H1 (cell line): ENCODE measurements at regions of chr11 and their contacts with region 1.

Region 1: DNA sequence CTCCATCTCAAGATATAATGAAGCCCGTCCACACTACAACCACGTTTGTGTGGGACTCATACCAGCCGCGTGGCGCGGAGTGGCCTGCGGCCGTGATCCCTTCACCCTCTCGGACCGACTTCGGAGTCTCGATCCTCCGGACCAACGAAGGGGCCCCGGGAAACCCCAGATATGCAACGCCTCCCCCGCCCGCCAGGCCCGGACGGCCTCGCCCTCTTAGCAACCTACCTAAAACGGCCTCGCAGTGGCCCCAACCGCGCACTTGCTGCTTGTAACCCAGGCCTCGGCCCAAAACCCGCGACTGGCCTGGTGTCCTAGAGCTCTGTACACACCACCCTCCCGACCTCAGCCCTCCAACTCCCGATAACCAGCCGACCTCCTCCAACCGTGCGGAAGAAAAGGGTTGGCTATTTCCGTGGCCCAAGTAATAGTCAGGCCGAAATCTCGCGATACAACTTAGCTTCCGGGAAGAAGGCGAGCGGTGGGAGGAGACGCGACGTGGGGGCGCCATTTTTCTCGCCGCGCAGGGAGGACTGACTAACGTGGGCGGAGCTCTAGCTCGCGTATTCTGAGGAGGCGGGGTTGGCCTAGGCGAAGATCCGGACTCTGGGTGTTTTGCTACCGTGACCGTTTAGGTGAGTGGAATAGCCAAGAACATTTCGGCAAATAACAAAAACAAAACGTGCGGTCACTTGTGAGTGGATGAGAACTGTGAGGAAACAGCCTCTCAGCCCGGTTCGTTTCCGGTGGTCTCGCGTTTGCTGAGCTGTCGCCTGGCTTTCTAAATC is at the starts of genes C11orf54 and TAF1D:
- DNase-seq: peak; percentile 88 to 93
- H3K4me3 ChIP-seq: peak within 1 kb of the TSS; percentile 91 to 100 (median 98)
- H3K27ac ChIP-seq: peak within 1 kb of the TSS; percentile 93
- H3K4me1 ChIP-seq: peaks cover 3 to 9% (median 6%) of the 10 kb centered on the region in 4 experiments; a peak in 6 of 7 replicates
- H3K27me3 ChIP-seq: no peaks in the 10 kb centered on the region
- CTCF ChIP-seq: no peak
- EP300 ChIP-seq: no peak
- POLR2A ChIP-seq: peak; percentile 92 to 99
- RAD21 ChIP-seq: no peak
- total RNA-seq, gene C11orf54: 21.5 and 24.5 TPM in 2 replicates
- total RNA-seq, gene TAF1D: 202 and 212 TPM in 2 replicates

Region 2: DNA sequence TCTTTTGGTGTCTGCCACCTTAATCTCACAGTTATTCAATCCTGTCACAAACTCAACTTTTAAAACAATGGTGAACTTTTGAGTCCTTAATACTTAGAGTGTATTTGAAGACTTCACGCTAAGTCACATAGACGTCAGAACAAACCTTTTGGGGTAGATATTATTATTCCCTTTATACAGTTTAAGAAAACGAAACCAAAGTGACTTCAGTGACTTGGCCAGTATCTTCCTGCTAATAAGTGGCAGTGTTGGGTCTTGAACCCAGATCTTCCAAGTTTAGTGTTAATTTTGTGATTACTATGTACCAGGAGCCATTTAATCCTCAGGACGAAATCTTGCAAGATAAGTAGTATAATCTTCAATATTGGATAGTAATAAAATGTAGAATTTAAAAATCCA is 79.1 kb before region 1 on chr11:
- CTCF ChIA-PET with region 1: no interaction called
- POLR2A ChIA-PET with region 1: interaction called, 12 read pairs
- DNase-seq: no peak
- H3K4me3 ChIP-seq: peak overlapping the region; percentile 83 to 92 (median 85)
- H3K27ac ChIP-seq: no peak overlapping the region
- H3K4me1 ChIP-seq: no peaks in the 10 kb centered on the region; a peak in 1 of 7 replicates
- H3K27me3 ChIP-seq: peaks cover 0 to 4% (median 2%) of the 10 kb centered on the region in 4 experiments; a peak in 3 of 7 replicates
- CTCF ChIP-seq: no peak
- EP300 ChIP-seq: no peak
- POLR2A ChIP-seq: no peak
- RAD21 ChIP-seq: no peak

Region 3: DNA sequence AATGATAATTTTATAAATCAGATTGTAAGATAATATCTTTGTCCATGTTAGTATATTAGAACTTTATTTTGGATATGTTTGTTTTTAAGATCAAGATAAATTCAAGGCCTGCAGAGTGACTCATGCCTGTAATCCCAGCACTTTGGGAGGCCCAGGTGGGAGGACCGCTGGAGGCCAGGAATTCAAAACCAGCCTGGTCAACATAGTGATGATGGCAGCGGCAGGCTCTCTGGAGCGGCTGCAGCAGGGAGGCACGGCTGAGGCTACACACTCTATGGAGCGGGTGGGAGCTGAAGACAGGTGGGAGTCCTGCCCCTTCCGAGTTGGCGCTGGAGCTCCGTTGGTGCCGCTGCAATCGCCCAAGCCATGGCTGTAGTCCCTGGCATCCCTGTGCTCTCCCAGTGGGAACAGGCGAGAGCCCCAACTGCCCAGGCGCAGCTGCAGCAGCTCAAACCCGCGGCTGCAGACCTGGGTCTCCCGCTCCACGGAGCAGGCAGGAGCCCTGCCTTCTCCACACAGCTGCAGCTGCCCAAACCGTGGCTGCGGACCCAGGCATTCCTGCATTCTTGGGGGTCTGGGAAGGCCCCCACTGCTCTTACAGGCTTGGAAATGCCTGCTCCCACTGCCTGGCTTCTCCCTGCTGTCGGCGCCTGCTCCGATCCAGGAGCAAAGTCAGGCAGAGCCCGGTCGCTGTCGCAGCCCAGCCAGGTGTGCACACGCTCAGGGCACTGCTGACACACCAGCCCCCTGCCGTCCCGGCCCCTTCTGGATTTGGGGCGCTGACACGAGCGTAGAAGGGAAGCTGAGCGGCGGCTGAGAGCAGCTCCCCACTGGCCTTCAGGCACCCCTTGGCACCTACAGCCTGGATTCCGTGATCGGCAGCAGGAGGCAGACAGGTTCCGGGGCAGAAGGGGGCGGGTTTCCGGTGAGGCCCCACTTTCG is 16.9 kb after region 1 on chr11:
- CTCF ChIA-PET with region 1: interaction called, 4 read pairs
- POLR2A ChIA-PET with region 1: interaction called, 50 read pairs
- DNase-seq: no peak
- H3K4me3 ChIP-seq: no peak overlapping the region
- H3K27ac ChIP-seq: no peak overlapping the region
- H3K4me1 ChIP-seq: no peaks in the 10 kb centered on the region
- H3K27me3 ChIP-seq: no peaks in the 10 kb centered on the region
- CTCF ChIP-seq: no peak
- EP300 ChIP-seq: no peak
- POLR2A ChIP-seq: no peak
- RAD21 ChIP-seq: no peak

Region 4: GRCh38 chr11:93775289-93775688 is 34.0 kb after region 1 on chr11:
- CTCF ChIA-PET with region 1: interaction called, 4 read pairs
- POLR2A ChIA-PET with region 1: interaction called, 134 read pairs
- DNase-seq: peak in 1 of 2 experiments; percentile 71
- H3K4me3 ChIP-seq: no peak overlapping the region
- H3K27ac ChIP-seq: no peak overlapping the region
- H3K4me1 ChIP-seq: no peaks in the 10 kb centered on the region; a peak in 2 of 7 replicates
- H3K27me3 ChIP-seq: no peaks in the 10 kb centered on the region
- CTCF ChIP-seq: peak in 2 of 3 experiments; percentile 35 to 64; a peak in 2 of 4 replicates
- EP300 ChIP-seq: no peak
- POLR2A ChIP-seq: no peak
- RAD21 ChIP-seq: 0 out of 4 replicates have a peak, but pooled peaks of 1 of the 2 experiments have one; percentile 4

Region 5: DNA sequence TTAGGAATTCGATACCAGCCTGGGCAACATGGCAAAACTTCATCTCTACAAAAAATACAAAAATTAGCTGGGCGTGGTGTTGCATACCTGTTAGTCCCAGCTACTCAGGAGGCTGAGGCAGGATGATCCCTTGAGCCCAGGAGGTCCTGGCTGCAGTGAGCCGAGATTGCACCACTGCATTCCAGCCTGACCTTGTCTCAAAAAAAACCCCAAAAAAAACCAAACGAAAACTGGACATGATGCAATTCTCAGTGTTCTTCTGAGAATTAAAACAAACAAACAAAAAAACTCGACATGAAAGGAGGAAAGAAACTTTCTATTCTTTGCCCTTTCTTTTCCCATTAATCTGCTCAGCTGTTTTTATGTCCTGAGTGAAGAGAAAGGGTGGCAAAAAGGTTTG is 50.2 kb after region 1 on chr11:
- CTCF ChIA-PET with region 1: interaction called, 3 read pairs
- POLR2A ChIA-PET with region 1: interaction called, 134 read pairs
- DNase-seq: no peak
- H3K4me3 ChIP-seq: no peak overlapping the region
- H3K27ac ChIP-seq: no peak overlapping the region
- H3K4me1 ChIP-seq: no peaks in the 10 kb centered on the region
- H3K27me3 ChIP-seq: no peaks in the 10 kb centered on the region
- CTCF ChIP-seq: no peak
- EP300 ChIP-seq: no peak
- POLR2A ChIP-seq: no peak
- RAD21 ChIP-seq: no peak

Region 6: GRCh38 chr11:93838967-93839366 is 97.7 kb after region 1 on chr11:
- CTCF ChIA-PET with region 1: no interaction called
- POLR2A ChIA-PET with region 1: no interaction called
- DNase-seq: no peak
- H3K4me3 ChIP-seq: no peak overlapping the region
- H3K27ac ChIP-seq: no peak overlapping the region
- H3K4me1 ChIP-seq: no peaks in the 10 kb centered on the region
- H3K27me3 ChIP-seq: no peaks in the 10 kb centered on the region
- CTCF ChIP-seq: no peak
- EP300 ChIP-seq: no peak
- POLR2A ChIP-seq: no peak
- RAD21 ChIP-seq: no peak

Region 7: GRCh38 chr11:93921695-93922468 is 180.6 kb after region 1 on chr11:
- CTCF ChIA-PET with region 1: no interaction called
- POLR2A ChIA-PET with region 1: no interaction called
- DNase-seq: peak; percentile 43 to 71
- H3K4me3 ChIP-seq: no peak overlapping the region
- H3K27ac ChIP-seq: no peak overlapping the region
- H3K4me1 ChIP-seq: no peaks in the 10 kb centered on the region
- H3K27me3 ChIP-seq: no peaks in the 10 kb centered on the region
- CTCF ChIP-seq: peak; percentile 57 to 92 (median 81)
- EP300 ChIP-seq: no peak
- POLR2A ChIP-seq: no peak
- RAD21 ChIP-seq: peak; percentile 93

Region 8: DNA sequence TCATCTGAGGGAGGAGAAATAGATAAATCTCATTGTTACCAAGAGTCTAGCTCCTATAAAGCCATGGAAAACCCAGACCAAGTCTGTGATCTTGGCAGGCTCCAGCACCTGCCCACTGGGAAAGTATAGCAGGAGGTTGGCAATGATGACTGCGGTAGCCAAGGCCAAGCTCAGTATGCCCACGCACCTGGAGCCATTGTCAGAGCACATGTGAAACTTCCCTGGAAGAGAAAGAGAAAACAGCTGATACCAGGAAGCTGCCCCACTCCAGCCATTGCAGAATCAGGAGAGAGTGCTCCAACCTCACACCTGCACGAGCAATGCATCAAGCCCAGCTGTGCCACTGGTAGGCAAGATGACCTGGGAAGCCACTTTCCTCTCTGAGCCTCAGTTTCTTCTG is 217.7 kb after region 1 on chr11:
- CTCF ChIA-PET with region 1: no interaction called
- POLR2A ChIA-PET with region 1: no interaction called
- DNase-seq: no peak
- H3K4me3 ChIP-seq: no peak overlapping the region
- H3K27ac ChIP-seq: no peak overlapping the region
- H3K4me1 ChIP-seq: no peaks in the 10 kb centered on the region
- H3K27me3 ChIP-seq: no peaks in the 10 kb centered on the region
- CTCF ChIP-seq: no peak
- EP300 ChIP-seq: no peak
- POLR2A ChIP-seq: no peak
- RAD21 ChIP-seq: no peak